AG04449 (cell line): ENCODE measurements at regions of chr9 and their contacts with region 1.

Region 1: DNA sequence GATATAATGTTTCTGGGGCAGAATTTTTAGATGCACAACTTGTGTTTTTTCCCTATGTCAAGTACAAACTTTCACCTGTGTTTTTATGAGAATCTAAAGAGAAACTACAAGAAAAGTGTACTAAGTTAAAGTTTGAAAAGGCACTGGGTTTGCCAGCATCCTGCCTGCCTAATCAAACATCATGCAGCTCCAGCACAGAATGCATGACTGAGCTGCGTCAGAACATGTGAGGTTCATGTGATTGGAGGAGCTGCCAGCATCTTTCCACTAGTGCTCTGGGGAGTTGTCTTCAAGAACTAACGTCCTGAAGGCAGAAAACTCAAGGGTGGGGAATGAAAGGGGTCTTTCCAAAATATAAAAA is 46.1 kb upstream of the RIC1 start:
- DNase-seq: peak; percentile 26
- H3K4me3 ChIP-seq: no peak overlapping the region
- CTCF ChIP-seq: no peak

Region 2: GRCh38 chr9:5186416-5187169 is 396.2 kb before region 1 on chr9:
- CTCF ChIA-PET with region 1: interaction called, 99 read pairs
- POLR2A ChIA-PET with region 1: no interaction called
- DNase-seq: peak; percentile 1
- H3K4me3 ChIP-seq: no peak overlapping the region
- CTCF ChIP-seq: peak; percentile 70

Region 3: GRCh38 chr9:5450359-5451091 is 132.3 kb before region 1 on chr9 and contains the start of gene CD274:
- CTCF ChIA-PET with region 1: interaction called, 75 read pairs
- POLR2A ChIA-PET with region 1: interaction called, 4 read pairs
- DNase-seq: no peak
- H3K4me3 ChIP-seq: peak within 1 kb of the TSS; percentile 72
- CTCF ChIP-seq: peak; percentile 70

Region 4: DNA sequence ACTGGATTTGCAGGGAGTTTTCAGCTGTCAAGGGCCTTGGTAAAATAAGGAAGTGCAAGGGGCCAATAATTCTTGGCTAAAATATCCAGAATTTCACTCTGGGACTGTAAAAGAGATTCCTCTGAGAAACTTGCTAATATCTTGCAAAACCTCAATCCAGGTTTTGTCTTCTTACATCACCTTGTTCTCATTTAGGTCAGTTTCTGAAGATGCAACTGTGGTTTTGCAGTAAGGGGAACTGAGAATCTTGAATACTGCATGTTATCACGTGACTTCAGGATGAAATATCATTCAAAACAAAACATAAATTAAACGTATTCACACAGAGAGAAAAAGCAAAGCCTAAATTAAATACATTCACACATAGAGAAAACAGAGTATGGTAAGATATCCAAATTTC is 11.1 kb after region 1 on chr9:
- CTCF ChIA-PET with region 1: interaction called, 71 read pairs
- POLR2A ChIA-PET with region 1: no interaction called
- DNase-seq: no peak
- H3K4me3 ChIP-seq: no peak overlapping the region
- CTCF ChIP-seq: no peak

Region 5: DNA sequence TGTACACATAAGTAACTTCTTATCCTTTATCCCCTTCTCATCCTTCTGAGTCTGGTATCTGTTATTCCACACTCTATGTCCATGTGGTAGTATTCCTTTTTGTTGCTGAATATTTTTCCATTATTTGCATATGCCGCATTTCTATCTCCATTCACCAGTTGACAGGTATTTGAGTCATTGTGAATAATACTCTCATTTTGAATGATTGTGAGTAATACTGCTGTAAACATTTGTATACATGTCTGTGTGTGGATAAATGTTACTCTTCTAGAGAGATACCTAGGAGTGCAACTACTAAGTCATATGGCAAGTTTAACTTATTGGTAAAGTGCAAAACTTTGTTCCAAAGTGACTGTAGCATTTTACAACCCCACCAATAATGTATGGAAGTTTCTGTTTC is 61.7 kb after region 1 on chr9:
- CTCF ChIA-PET with region 1: no interaction called
- POLR2A ChIA-PET with region 1: no interaction called
- DNase-seq: no peak
- H3K4me3 ChIP-seq: no peak overlapping the region
- CTCF ChIP-seq: no peak

Region 6: GRCh38 chr9:5671711-5672353 is 89.0 kb after region 1 on chr9:
- CTCF ChIA-PET with region 1: no interaction called
- POLR2A ChIA-PET with region 1: no interaction called
- DNase-seq: no peak
- H3K4me3 ChIP-seq: no peak overlapping the region
- CTCF ChIP-seq: no peak